ENCODE measurements at regions of chr6 and their contacts with region 1.

Region 1: GRCh38 chr6:43211955-43212354 is 17.3 kb downstream of the DNPH1 start:
- DNase-seq: no peak
- ATAC-seq: peak; percentile 33; the same call in 1 of the 3 replicates
- H3K4me3 ChIP-seq: no peak overlapping the region
- H3K27ac ChIP-seq: no peak overlapping the region
- H3K4me1 ChIP-seq: peaks cover 0 to 8% of the 10 kb centered on the region in 2 experiments; a peak in 2 of 5 replicates
- H3K27me3 ChIP-seq: no peaks in the 10 kb centered on the region
- CTCF ChIP-seq: peak in 2 of 3 experiments; percentile 23 to 29; a peak in 3 of 6 replicates
- EP300 ChIP-seq: no peak
- POLR2A ChIP-seq: no peak
- RAD21 ChIP-seq: peak in 1 of 2 experiments; percentile 42; a peak in 2 of 4 replicates

Region 2: GRCh38 chr6:42674780-42675179 is 537.2 kb before region 1 on chr6:
- CTCF ChIA-PET with region 1: no interaction called
- POLR2A ChIA-PET with region 1: no interaction called
- in situ Hi-C with region 1: no loop called
- intact Hi-C with region 1: no loop called
- DNase-seq: no peak
- ATAC-seq: no peak; the same call in 1 of the 3 replicates
- H3K4me3 ChIP-seq: no peak overlapping the region
- H3K27ac ChIP-seq: no peak overlapping the region
- H3K4me1 ChIP-seq: no peaks in the 10 kb centered on the region
- H3K27me3 ChIP-seq: no peaks in the 10 kb centered on the region
- CTCF ChIP-seq: no peak
- EP300 ChIP-seq: no peak
- POLR2A ChIP-seq: no peak
- RAD21 ChIP-seq: no peak

Region 3: DNA sequence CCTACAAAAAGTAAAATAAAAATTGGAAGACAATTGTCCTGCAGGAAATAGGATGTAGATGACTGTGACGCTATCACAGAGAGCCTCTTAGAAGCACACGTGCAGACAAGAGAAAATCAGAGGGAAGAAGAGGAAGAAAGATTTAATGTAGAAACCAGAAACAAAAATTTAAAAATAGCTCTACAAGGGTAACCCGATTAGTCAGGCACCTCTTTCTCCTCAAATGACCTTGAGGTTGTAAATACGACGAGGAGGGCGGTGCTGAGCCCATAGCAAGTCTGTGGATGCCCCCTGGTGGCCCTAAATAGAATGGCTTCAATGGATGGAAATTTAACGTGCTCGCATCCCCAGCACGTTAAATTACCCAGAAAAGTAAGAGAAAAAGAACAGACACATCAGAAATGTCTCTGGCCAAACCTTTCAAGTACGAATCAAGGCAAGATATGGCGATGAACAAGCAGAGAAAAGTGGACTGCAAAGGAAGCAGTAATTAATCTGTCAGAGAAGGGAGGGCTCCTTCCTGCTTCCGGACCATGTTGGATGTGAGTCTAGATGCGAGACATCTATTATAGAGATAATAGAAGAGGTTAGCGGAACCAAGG is 485.4 kb before region 1 on chr6:
- CTCF ChIA-PET with region 1: no interaction called
- POLR2A ChIA-PET with region 1: no interaction called
- in situ Hi-C with region 1: no loop called
- intact Hi-C with region 1: no loop called
- DNase-seq: peak; percentile 87 to 92 (median 90)
- ATAC-seq: peak; percentile 90
- H3K4me3 ChIP-seq: no peak overlapping the region
- H3K27ac ChIP-seq: no peak overlapping the region
- H3K4me1 ChIP-seq: peaks cover 6 to 8% of the 10 kb centered on the region in 2 experiments; a peak in 4 of 5 replicates
- H3K27me3 ChIP-seq: peaks cover 7 to 11% of the 10 kb centered on the region in 2 experiments
- CTCF ChIP-seq: peak; percentile 94 to 98 (median 98)
- EP300 ChIP-seq: peak; percentile 27; the same call in 1 of the 2 replicates
- POLR2A ChIP-seq: no peak
- RAD21 ChIP-seq: peak; percentile 99

Region 4: GRCh38 chr6:43021270-43022047 is 190.5 kb before region 1 on chr6 and contains the start of gene RRP36:
- CTCF ChIA-PET with region 1: no interaction called
- POLR2A ChIA-PET with region 1: no interaction called
- in situ Hi-C with region 1: no loop called
- intact Hi-C with region 1: no loop called
- DNase-seq: peak; percentile 85 to 92 (median 90)
- ATAC-seq: peak; percentile 93
- H3K4me3 ChIP-seq: peak within 1 kb of the TSS; percentile 72
- H3K27ac ChIP-seq: peak within 1 kb of the TSS; percentile 83
- H3K4me1 ChIP-seq: peaks cover 34 to 35% of the 10 kb centered on the region in 2 experiments
- H3K27me3 ChIP-seq: no peaks in the 10 kb centered on the region
- CTCF ChIP-seq: no peak
- EP300 ChIP-seq: no peak; the same call in 1 of the 2 replicates
- POLR2A ChIP-seq: peak; percentile 87
- RAD21 ChIP-seq: no peak
- polyA plus RNA-seq, gene RRP36: 27.6 to 31.7 TPM

Region 5: GRCh38 chr6:43200541-43200940 is 11.4 kb before region 1 on chr6:
- CTCF ChIA-PET with region 1: no interaction called
- POLR2A ChIA-PET with region 1: interaction called, 13 read pairs
- in situ Hi-C with region 1: no loop called
- intact Hi-C with region 1: no loop called
- DNase-seq: no peak
- ATAC-seq: no peak
- H3K4me3 ChIP-seq: no peak overlapping the region
- H3K27ac ChIP-seq: no peak overlapping the region
- H3K4me1 ChIP-seq: peaks cover 0 to 3% of the 10 kb centered on the region in 2 experiments; a peak in 2 of 5 replicates
- H3K27me3 ChIP-seq: no peaks in the 10 kb centered on the region
- CTCF ChIP-seq: no peak
- EP300 ChIP-seq: no peak
- POLR2A ChIP-seq: no peak
- RAD21 ChIP-seq: no peak

Measured in K562 (cell line).